MCF 10A (cell line): ENCODE measurements at regions of chr15 and their contacts with region 1.

Region 1: GRCh38 chr15:81265944-81266775 is 57.8 kb downstream of the STARD5 start:
- DNase-seq: peak; percentile 82
- H3K4me3 Mint-ChIP-seq: peak overlapping the region; percentile 37
- H3K27ac Mint-ChIP-seq: no peak overlapping the region
- H3K4me1 Mint-ChIP-seq: peaks cover 9% of the 10 kb centered on the region
- H3K27me3 Mint-ChIP-seq: no peaks in the 10 kb centered on the region
- CTCF ChIP-seq: peak; percentile 85

Region 2: GRCh38 chr15:80970018-80970658 is 296.0 kb before region 1 on chr15:
- CTCF ChIA-PET with region 1: interaction called, 12 read pairs
- POLR2A ChIA-PET with region 1: no interaction called
- intact Hi-C with region 1: loop called (anchors 5 kb)
- DNase-seq: peak; percentile 71
- H3K4me3 Mint-ChIP-seq: no peak overlapping the region
- H3K27ac Mint-ChIP-seq: no peak overlapping the region
- H3K4me1 Mint-ChIP-seq: no peaks in the 10 kb centered on the region
- H3K27me3 Mint-ChIP-seq: no peaks in the 10 kb centered on the region
- CTCF ChIP-seq: peak; percentile 79

Region 3: GRCh38 chr15:81106560-81106959 is 159.6 kb before region 1 on chr15:
- CTCF ChIA-PET with region 1: interaction called, 459 read pairs
- POLR2A ChIA-PET with region 1: interaction called, 12 read pairs
- intact Hi-C with region 1: loop called (anchors 1 kb)
- DNase-seq: peak; percentile 76
- H3K4me3 Mint-ChIP-seq: no peak overlapping the region
- H3K27ac Mint-ChIP-seq: no peak overlapping the region
- H3K4me1 Mint-ChIP-seq: peaks cover 23% of the 10 kb centered on the region
- H3K27me3 Mint-ChIP-seq: no peaks in the 10 kb centered on the region
- CTCF ChIP-seq: peak; percentile 75

Region 4: DNA sequence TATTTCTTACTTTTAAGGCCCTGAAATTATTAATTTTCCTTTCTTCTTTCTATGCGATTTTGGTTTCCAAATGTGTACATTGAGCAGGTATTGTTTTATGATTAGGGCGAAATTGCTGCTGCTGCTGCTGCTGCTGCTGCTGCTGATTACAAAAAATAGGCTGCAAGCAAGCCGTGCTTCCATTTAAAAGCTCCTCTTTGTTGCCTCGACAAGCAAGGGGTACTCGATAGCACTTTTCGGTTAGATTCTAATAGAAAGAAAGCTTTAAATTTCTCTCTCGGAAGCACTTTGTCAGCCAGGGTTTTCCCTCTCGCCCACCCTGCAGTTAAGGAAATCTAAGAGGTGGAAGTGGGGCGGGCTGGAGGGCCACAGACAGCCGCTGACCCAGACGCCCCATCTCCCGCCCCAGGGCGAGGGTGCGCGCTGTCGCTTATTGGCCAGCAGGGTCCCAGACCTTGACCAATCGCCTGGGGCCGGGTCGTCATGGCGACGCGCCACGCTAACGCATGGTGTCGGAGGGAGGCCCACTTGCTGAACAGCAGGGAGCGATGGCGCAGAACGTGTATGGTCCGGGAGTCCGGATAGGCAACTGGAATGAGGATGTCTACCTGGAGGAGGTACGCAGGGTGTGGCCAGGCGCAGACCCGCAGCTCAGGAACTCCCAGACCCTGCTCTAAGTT is 132.2 kb before region 1 on chr15 and contains the start of gene CFAP161:
- CTCF ChIA-PET with region 1: interaction called, 12 read pairs
- POLR2A ChIA-PET with region 1: no interaction called
- intact Hi-C with region 1: no loop called
- DNase-seq: no peak
- H3K4me3 Mint-ChIP-seq: no peak within 1 kb of the TSS
- H3K27ac Mint-ChIP-seq: no peak within 1 kb of the TSS
- H3K4me1 Mint-ChIP-seq: no peaks in the 10 kb centered on the region
- H3K27me3 Mint-ChIP-seq: no peaks in the 10 kb centered on the region
- CTCF ChIP-seq: no peak
- total RNA-seq, gene CFAP161: not detected in 2 replicates

Region 5: DNA sequence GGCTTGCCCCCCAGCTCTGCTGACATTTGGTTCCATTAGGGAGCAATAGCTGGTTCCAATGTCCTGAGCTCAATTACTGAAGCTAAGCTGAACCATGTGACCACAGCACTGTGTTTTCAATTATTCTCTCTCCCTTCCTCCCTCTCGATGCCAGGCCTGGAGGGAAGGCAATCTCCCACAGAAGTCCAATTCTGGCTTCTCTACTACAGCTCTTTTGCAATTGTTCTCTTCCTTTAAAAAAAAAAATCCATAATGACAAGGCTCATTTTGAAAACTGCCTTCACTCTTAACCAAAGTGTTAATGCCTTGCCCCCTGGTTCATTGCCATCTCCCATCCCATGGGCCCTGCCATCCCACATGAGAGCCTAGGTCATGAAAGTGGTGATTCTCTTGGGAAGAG is 44.7 kb before region 1 on chr15:
- CTCF ChIA-PET with region 1: interaction called, 12 read pairs
- POLR2A ChIA-PET with region 1: no interaction called
- intact Hi-C with region 1: no loop called
- DNase-seq: no peak
- H3K4me3 Mint-ChIP-seq: no peak overlapping the region
- H3K27ac Mint-ChIP-seq: no peak overlapping the region
- H3K4me1 Mint-ChIP-seq: no peaks in the 10 kb centered on the region
- H3K27me3 Mint-ChIP-seq: no peaks in the 10 kb centered on the region
- CTCF ChIP-seq: no peak

Region 6: DNA sequence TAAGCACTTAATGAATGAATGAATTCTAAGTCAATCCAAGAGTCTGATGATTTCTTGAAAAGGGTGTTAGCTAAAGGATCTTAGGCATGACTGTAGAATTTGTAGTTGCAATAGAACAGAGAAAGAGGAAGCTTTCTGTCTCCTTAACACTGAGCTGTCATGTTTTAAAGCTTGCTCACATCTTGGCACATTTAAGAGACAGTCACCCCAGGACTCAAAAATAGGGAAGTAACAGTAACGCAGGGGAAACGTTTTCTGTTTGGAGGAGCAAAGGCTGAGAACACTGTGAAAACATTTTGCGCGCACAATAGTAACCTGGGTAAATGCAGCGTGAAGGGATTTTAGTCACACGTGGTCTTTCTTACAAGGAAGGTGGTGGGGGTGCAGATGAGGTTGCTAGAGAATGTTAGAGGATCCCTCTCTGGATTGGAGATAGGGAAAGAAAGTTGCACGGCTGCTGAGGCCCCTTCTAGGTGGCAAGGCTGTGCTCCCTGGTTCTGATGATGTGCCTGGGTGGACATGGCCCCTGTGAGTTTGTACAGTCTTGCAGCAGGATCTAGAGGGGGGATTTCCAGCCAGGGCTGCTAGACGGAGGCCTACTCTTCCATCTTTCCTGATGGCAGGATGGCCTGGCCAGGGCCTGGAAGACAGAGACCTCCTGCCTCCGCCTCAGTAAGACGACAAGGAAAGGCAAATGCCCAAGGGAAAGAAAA is 45.7 kb after region 1 on chr15:
- CTCF ChIA-PET with region 1: interaction called, 16 read pairs
- POLR2A ChIA-PET with region 1: interaction called, 3 read pairs
- intact Hi-C with region 1: no loop called
- DNase-seq: no peak
- H3K4me3 Mint-ChIP-seq: no peak overlapping the region
- H3K27ac Mint-ChIP-seq: no peak overlapping the region
- H3K4me1 Mint-ChIP-seq: peaks cover 24% of the 10 kb centered on the region
- H3K27me3 Mint-ChIP-seq: no peaks in the 10 kb centered on the region
- CTCF ChIP-seq: no peak

Region 7: DNA sequence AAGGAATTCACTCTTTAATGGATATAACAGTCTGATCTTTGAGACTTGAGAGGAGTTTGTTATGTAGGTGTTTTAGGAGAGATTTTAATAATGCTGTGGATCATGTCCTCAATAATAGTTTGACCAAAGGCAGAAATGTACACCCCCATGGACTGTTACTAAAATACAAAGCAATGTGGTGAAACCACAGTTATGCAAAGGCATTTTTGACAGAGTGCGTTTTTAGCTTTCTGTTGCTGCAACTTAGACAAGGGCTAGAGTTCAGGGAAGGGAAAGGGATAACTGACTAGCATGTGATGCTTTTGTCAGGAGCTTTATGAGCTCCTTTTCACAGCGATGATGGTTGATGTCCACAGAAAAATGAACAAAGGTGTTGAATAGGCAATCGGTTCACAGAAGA is 61.4 kb after region 1 on chr15:
- CTCF ChIA-PET with region 1: no interaction called
- POLR2A ChIA-PET with region 1: no interaction called
- intact Hi-C with region 1: no loop called
- DNase-seq: no peak
- H3K4me3 Mint-ChIP-seq: no peak overlapping the region
- H3K27ac Mint-ChIP-seq: no peak overlapping the region
- H3K4me1 Mint-ChIP-seq: peaks cover 22% of the 10 kb centered on the region
- H3K27me3 Mint-ChIP-seq: no peaks in the 10 kb centered on the region
- CTCF ChIP-seq: no peak

Region 8: DNA sequence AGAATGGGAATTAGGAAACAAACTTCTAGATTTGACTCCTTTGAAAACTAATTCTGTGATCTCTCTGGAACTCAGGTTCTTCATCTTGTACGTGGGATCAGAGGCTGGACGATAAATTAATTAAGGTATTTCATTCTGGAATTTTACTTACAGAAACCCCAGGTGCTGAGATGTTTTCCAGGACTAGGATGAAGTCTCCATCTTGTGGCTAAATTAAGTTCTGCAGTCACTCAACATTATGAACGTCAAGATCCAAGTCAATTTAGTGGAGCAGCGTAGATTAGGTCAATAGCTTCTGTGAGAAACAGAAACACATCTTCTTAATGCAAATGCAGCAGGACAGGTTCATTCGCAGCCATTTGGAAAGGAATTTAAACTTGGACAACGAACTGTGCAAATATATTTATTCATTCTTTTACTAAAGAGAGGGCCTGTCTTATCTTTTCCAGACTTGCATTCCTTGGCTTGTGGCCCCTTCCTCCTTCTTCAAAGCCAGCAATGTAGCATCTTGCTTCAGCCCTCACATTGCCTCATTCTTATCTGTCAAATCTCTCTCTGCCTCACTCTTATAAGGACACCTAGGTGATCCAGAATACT is 134.6 kb after region 1 on chr15:
- CTCF ChIA-PET with region 1: interaction called, 318 read pairs
- POLR2A ChIA-PET with region 1: interaction called, 3 read pairs
- intact Hi-C with region 1: no loop called
- DNase-seq: peak; percentile 63
- H3K4me3 Mint-ChIP-seq: no peak overlapping the region
- H3K27ac Mint-ChIP-seq: no peak overlapping the region
- H3K4me1 Mint-ChIP-seq: peaks cover 9% of the 10 kb centered on the region
- H3K27me3 Mint-ChIP-seq: no peaks in the 10 kb centered on the region
- CTCF ChIP-seq: peak; percentile 77

Region 9: DNA sequence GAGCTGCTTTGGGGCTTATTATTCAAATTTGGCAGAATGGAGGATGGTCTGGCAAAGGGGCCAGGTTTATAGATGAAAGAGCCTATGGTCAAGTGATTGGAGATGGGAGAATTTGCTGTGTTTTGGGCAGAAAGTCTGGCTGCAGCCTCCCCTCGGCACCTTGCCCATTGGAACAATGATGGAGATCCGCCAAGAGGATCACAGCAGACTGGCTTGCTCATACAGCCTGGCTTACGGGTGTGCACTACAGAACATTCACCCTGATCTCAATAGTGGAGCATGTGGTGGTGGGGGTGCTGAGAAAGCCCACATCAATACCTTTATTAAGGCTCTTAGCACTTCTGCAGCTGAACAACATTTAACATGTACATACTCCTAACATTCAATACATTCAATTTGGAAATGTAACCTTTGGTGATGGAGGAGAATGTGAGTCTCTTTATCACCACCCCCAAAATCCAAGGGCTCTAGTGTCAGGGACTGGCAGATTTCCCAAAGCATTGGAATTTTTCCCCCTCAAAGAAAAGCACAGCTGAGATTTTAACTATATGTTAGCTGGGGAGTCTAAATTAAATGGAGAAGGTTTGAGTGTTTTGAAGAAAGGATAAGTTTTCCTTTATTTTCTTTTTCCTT is 226.3 kb after region 1 on chr15:
- CTCF ChIA-PET with region 1: no interaction called
- POLR2A ChIA-PET with region 1: no interaction called
- intact Hi-C with region 1: no loop called
- DNase-seq: peak; percentile 60
- H3K4me3 Mint-ChIP-seq: no peak overlapping the region
- H3K27ac Mint-ChIP-seq: no peak overlapping the region
- H3K4me1 Mint-ChIP-seq: peaks cover 17% of the 10 kb centered on the region
- H3K27me3 Mint-ChIP-seq: no peaks in the 10 kb centered on the region
- CTCF ChIP-seq: no peak